ENCODE measurements at regions of chr9 and their contacts with region 1.

Region 1: DNA sequence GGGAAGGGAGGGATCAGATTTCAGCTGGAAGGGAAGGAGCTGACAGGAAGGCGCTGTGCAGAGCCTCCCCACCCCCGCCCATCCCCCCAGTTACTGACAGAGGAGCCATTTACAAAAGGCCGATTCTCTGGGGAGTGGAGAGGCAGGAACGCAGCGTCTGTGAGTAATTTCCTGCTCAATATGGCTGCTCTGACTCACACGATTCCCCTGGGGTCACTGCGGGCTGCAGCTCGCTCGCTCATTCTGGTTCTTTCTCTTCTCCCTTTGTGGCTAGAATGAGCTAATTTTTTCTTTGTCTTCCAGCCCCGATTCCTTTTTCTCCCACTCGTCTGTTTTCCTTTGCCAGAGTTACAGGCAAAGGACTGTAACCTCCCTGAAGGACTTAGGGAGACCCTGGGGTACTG is 28.8 kb downstream of the PTPA start:
- DNase-seq: peak in 1 of 2 experiments; percentile 93
- H3K4me3 ChIP-seq: peak overlapping the region; percentile 29 to 55 (median 38); a peak in 7 of 8 replicates
- H3K27ac ChIP-seq: peak overlapping the region; percentile 96
- H3K4me1 ChIP-seq: peaks cover 28 to 46% (median 38%) of the 10 kb centered on the region in 4 experiments
- H3K27me3 ChIP-seq: no peaks in the 10 kb centered on the region
- CTCF ChIP-seq: no peak
- EP300 ChIP-seq: peak in 1 of 2 experiments; percentile 92; a peak in 2 of 3 replicates
- POLR2A ChIP-seq: peak in 1 of 2 experiments; percentile 83; a peak in 2 of 3 replicates
- RAD21 ChIP-seq: peak; percentile 1 to 20; a peak in 2 of 4 replicates

Region 2: GRCh38 chr9:128735373-128735772 is 404.6 kb before region 1 on chr9:
- CTCF ChIA-PET with region 1: no interaction called
- POLR2A ChIA-PET with region 1: no interaction called
- DNase-seq: no peak
- H3K4me3 ChIP-seq: no peak overlapping the region
- H3K27ac ChIP-seq: no peak overlapping the region
- H3K4me1 ChIP-seq: peaks cover 0 to 1% (median 0%) of the 10 kb centered on the region in 4 experiments; a peak in 1 of 7 replicates
- H3K27me3 ChIP-seq: no peaks in the 10 kb centered on the region
- CTCF ChIP-seq: no peak
- EP300 ChIP-seq: no peak
- POLR2A ChIP-seq: no peak
- RAD21 ChIP-seq: no peak

Region 3: DNA sequence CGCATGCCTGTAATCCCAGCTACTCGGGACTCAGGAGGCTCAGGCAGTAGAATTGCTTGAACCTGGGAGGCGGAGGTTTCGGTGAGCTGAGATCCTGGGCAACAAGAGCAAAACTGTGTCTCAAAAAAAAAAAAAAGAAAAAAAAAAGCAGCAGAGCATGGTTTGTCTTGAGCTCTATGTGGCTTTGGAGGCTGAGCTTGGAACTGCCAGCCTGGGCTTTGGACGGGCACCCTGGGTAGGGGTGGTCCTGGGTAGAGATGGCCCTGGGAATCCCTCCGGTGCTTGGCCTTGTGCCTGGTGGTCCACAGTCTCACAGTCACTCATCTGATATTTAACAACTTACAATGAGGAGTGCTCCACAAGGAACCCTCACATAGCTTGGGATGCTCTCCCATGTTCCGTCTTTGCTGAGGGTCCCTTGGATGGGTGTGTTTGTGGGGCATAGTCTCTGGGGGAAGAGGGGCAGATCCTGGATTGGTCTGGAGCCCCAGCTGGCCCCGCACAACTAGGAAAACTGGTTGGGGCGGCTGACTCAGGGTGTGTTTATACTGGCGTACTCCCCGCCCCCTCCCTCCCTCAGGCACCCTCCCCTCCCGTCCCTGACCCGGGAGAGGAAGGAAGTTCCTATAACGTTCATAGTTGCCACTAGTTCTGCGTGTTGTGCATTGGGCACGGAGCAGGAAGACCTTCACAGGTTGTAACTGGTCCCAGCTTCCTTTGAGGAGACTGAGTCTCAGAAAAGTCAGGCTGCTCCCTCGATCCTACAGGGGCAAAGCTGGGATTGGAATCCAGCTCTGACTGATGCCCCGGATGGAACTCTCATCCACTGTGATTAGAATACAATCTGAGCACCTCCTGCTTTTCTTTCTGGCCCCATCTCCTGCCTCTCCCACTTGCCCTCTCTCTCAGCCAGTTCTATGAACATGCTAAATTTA is 26.9 kb after region 1 on chr9:
- CTCF ChIA-PET with region 1: interaction called, 831 read pairs
- POLR2A ChIA-PET with region 1: interaction called, 12 read pairs
- DNase-seq: no peak
- H3K4me3 ChIP-seq: peak overlapping the region in 3 of 4 experiments; percentile 13 to 47 (median 15); a peak in 5 of 8 replicates
- H3K27ac ChIP-seq: 0 out of 2 replicates have a peak overlapping the region, but pooled peaks have one; percentile 50
- H3K4me1 ChIP-seq: peaks cover 8 to 20% (median 15%) of the 10 kb centered on the region in 4 experiments
- H3K27me3 ChIP-seq: peaks cover 0 to 1% (median under 1%) of the 10 kb centered on the region in 4 experiments; a peak in 2 of 7 replicates
- CTCF ChIP-seq: no peak
- EP300 ChIP-seq: no peak
- POLR2A ChIP-seq: peak in 1 of 2 experiments; percentile 35; a peak in 1 of 3 replicates
- RAD21 ChIP-seq: no peak

Region 4: GRCh38 chr9:129333953-129334724 is 194.1 kb after region 1 on chr9:
- CTCF ChIA-PET with region 1: interaction called, 11 read pairs
- POLR2A ChIA-PET with region 1: interaction called, 10 read pairs
- DNase-seq: peak; percentile 87 to 94
- H3K4me3 ChIP-seq: peak overlapping the region in 3 of 4 experiments; percentile 23 to 49 (median 40); a peak in 6 of 8 replicates
- H3K27ac ChIP-seq: peak overlapping the region; percentile 92
- H3K4me1 ChIP-seq: peaks cover 8 to 40% (median 34%) of the 10 kb centered on the region in 4 experiments
- H3K27me3 ChIP-seq: 0 out of 7 replicates have a peak, but pooled peaks cover 0 to 2% (median 0%) of the 10 kb centered on the region in 4 experiments
- CTCF ChIP-seq: peak in 1 of 3 experiments; percentile 7; a peak in 1 of 4 replicates
- EP300 ChIP-seq: peak in 1 of 2 experiments; percentile 92; a peak in 1 of 3 replicates
- POLR2A ChIP-seq: peak in 1 of 2 experiments; percentile 43; a peak in 1 of 3 replicates
- RAD21 ChIP-seq: peak in 1 of 2 experiments; percentile 35; a peak in 2 of 4 replicates

Region 5: DNA sequence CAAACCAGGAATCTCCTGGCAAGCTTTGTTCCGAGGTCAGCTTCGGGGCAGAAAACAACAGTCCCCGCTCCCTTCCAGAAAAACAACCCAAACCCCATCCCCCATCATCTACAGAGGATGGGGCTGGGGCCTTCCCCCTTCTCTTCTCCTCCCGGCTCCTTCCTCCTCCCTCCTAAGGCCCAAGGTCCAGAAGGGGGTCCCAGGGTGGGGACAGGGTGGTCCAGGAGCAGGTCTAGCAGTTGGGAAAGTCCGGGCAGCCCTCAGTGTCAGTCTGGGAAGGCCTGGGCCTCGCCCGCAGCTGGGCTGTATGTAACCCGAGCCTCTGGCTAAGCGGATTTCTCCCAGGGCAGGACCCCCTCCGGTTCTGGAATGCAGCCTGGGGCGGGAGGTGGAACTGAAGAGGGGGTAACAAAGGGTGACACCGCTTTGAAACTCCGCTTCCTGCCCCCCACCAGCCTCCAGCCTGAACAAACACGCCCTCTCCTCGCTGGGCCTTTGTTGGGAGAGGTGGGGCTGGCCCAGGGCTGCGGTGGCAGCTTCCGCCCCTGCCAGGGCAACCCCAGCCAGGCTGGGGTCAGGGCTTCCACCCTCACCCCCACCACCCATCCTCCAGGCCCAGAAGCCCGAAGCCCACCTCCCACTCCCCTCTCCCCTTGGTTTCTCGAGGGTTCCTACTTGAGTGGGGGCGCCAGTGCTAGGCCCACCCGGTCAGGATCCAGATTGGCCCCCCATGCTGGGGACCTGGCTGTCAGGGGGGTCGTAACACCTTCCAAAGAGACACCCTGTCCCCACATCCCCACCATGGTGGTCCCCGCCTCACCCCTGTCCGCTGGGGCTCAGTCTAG is 417.4 kb after region 1 on chr9:
- CTCF ChIA-PET with region 1: interaction called, 11 read pairs
- POLR2A ChIA-PET with region 1: no interaction called
- DNase-seq: peak; percentile 94 to 96
- H3K4me3 ChIP-seq: peak overlapping the region; percentile 2 to 50 (median 36); a peak in 7 of 8 replicates
- H3K27ac ChIP-seq: peak overlapping the region; percentile 76
- H3K4me1 ChIP-seq: peaks cover 7 to 57% (median 41%) of the 10 kb centered on the region in 4 experiments
- H3K27me3 ChIP-seq: no peaks in the 10 kb centered on the region
- CTCF ChIP-seq: no peak
- EP300 ChIP-seq: peak; percentile 34 to 91; a peak in 2 of 3 replicates
- POLR2A ChIP-seq: peak in 1 of 2 experiments; percentile 44; a peak in 1 of 3 replicates
- RAD21 ChIP-seq: peak; percentile 0 to 1; a peak in 1 of 4 replicates

Region 6: GRCh38 chr9:129617167-129617566 is 477.2 kb after region 1 on chr9:
- CTCF ChIA-PET with region 1: interaction called, 104 read pairs
- POLR2A ChIA-PET with region 1: interaction called, 4 read pairs
- DNase-seq: no peak
- H3K4me3 ChIP-seq: no peak overlapping the region
- H3K27ac ChIP-seq: no peak overlapping the region
- H3K4me1 ChIP-seq: peaks cover 0 to 8% (median 2%) of the 10 kb centered on the region in 4 experiments; a peak in 3 of 7 replicates
- H3K27me3 ChIP-seq: peaks cover 18 to 36% (median 30%) of the 10 kb centered on the region in 4 experiments
- CTCF ChIP-seq: peak in 2 of 3 experiments; percentile 71 to 80; a peak in 3 of 4 replicates
- EP300 ChIP-seq: no peak
- POLR2A ChIP-seq: no peak
- RAD21 ChIP-seq: peak; percentile 78 to 85